ENCODE measurements at regions of chr9 and their contacts with region 1.

Region 1: DNA sequence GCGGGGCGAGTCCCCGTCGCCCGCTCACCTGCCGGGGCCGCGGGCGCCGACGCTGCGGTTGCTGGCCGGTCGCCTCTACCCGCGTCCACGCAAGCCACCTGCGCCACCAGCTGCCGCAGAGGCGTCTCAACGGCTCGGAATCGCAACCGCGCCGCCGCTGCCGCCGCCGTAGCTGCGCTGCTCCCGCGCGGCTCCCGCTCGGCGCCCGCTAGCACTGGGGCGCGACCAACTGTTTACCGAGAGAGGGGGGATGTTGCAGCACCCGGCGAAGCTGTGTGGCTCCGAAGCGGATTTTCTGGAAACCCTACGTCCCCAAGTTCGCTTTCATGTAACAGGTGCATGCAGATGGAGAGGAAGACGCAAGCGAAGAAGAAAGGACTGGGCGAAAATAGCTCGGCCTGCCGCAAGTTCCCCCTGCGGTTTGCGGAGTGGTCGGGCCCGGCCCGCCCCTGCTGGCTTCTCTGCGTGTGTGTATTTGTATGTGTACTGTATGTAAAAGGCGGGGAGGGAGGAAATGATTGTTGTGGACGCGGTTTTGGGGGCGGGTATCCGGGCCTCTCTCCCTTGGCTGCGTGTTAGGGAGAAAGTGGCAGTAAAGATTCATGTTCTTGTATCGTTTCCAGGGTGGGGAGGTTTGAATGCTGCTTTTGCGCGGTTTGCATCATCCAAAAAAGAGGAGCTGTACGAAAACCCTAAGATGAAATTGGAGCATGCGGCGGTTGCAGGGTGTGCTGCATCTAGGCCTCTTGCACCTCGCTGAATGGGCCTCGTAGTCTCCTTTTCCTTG is at the start of gene PSIP1:
- DNase-seq: peak; percentile 94
- H3K4me3 ChIP-seq: peak within 1 kb of the TSS; percentile 99
- H3K27ac ChIP-seq: peak within 1 kb of the TSS; percentile 82
- H3K4me1 ChIP-seq: peaks cover 47% of the 10 kb centered on the region
- CTCF ChIP-seq: 0 out of 2 replicates have a peak, but pooled peaks have one; percentile 19
- total RNA-seq, gene PSIP1: 132 and 146 TPM in 2 replicates

Region 2: DNA sequence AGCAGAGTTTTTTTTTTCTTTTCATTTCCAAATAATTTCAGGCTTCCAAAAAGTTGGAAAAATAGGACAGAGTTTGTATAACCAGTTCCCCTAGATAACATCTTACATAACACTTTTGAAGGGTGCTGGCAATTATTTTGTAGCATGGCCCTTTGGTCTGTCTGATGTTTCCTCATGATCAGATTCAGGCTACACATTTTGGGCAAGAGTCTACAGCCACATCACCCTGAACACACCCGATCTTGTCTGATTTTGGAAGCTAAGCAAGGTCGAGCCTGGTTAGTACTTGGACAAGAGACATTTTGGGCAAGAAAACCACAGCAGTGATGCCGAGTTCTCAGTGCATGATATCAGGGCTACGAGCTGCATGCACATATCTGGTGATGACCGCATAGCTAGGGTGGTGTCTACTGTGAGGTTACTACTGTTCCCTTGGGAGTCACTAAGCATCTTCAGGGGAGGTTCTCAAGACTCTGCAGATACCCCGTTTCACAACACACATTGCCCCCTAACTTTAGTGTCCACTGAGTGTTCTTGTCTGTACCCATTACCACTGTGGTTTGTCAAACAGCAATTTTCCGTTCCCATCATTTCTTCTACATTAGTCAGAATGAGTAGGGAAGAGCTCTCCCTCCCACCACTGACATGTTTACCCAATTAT is 290.2 kb before region 1 on chr9:
- CTCF ChIA-PET with region 1: no interaction called
- POLR2A ChIA-PET with region 1: no interaction called
- intact Hi-C with region 1: no loop called
- DNase-seq: no peak
- H3K4me3 ChIP-seq: no peak overlapping the region
- H3K27ac ChIP-seq: no peak overlapping the region
- H3K4me1 ChIP-seq: no peaks in the 10 kb centered on the region
- CTCF ChIP-seq: no peak

Region 3: DNA sequence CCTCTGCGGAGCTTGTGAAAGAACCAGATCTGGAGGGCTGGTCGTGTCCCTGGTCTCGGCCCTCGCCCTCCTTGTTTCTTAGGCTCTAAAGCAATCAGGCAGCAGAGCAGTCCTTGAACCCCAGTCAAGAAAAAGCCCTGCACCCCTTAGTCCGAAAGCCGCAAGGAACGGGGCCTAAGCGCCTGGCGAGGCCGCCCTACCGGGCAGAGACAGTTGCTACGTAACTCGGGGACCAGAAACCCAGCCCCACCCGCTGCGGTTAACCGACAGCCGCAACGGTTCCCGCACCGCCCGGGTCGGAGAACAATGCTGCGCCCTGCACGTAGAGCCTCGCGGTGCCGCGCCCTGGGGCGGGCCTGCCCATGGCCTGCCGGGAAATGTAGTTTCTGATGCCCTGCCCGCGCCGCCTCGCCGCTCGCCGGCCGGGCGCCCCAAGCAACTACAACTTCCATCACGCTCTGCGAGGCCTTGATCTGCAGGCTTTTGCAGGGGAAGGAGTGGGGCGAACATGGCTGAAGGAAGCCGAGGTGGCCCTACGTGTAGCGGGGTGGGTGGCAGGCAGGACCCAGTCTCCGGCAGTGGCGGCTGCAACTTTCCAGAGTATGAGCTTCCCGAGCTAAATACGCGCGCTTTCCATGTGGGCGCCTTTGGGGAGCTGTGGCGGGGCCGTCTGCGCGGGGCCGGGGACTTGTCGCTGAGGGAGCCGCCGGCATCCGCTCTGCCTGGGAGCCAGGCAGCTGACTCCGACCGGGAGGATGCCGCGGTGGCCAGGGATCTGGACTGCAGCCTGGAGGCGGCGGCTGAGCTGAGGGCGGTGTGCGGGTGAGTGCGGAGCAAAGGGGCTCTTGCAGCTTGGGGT is 88.4 kb before region 1 on chr9 and contains the start of gene SNAPC3:
- CTCF ChIA-PET with region 1: no interaction called
- POLR2A ChIA-PET with region 1: interaction called, 6 read pairs
- intact Hi-C with region 1: loop called (anchors 1 kb)
- DNase-seq: peak; percentile 95
- H3K4me3 ChIP-seq: peak within 1 kb of the TSS; percentile 90
- H3K27ac ChIP-seq: peak within 1 kb of the TSS; percentile 68
- H3K4me1 ChIP-seq: peaks cover 40% of the 10 kb centered on the region
- CTCF ChIP-seq: no peak
- total RNA-seq, gene SNAPC3: 54.2 and 66.1 TPM in 2 replicates

Region 4: DNA sequence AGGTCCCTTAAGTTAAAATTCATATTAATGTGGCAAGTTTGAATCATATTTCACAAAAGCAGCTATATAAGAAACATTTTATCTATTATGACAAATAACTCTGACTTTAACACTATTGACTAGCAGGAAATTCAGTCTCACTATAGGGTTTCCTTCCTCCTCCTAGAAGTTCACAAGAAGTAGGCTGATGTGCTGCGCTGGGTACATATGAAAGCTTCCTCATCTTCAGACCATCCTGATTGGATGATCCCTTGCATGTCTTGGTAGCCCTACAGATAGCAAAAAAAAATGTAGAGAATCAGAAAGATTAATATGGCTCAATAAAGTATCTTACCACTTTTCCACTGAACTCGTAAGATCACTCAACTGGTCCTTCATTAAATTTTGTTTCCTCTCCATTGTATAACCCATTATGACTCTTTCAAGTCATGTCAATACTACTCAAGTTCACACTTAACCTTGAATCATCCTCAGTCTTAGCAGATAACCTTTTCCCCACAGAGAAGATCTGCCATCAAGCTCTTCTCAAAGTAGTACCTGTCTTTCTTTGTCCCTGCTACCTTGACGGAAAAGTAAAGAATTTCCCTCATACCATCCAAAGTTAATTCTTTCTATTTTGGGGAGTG is 11.3 kb after region 1 on chr9:
- CTCF ChIA-PET with region 1: no interaction called
- POLR2A ChIA-PET with region 1: interaction called, 12 read pairs
- intact Hi-C with region 1: no loop called
- DNase-seq: no peak
- H3K4me3 ChIP-seq: no peak overlapping the region
- H3K27ac ChIP-seq: no peak overlapping the region
- H3K4me1 ChIP-seq: no peaks in the 10 kb centered on the region
- CTCF ChIP-seq: no peak

Region 5: GRCh38 chr9:15543047-15543813 is 32.2 kb after region 1 on chr9:
- CTCF ChIA-PET with region 1: no interaction called
- POLR2A ChIA-PET with region 1: interaction called, 16 read pairs
- intact Hi-C with region 1: no loop called
- DNase-seq: no peak
- H3K4me3 ChIP-seq: no peak overlapping the region
- H3K27ac ChIP-seq: no peak overlapping the region
- H3K4me1 ChIP-seq: no peaks in the 10 kb centered on the region
- CTCF ChIP-seq: no peak

Measured in OCI-LY7 (cell line).